GM23248 (cell line): ENCODE measurements at regions of chr20 and their contacts with region 1.

Region 1: GRCh38 chr20:59217794-59218280 is 54.2 kb downstream of the ZNF831 start:
- DNase-seq: peak; percentile 23
- H3K4me3 ChIP-seq: no peak overlapping the region
- H3K27ac ChIP-seq: no peak overlapping the region
- H3K4me1 ChIP-seq: peaks cover 5% of the 10 kb centered on the region
- H3K27me3 ChIP-seq: peaks cover 28% of the 10 kb centered on the region

Region 2: GRCh38 chr20:58623826-58624473 is 593.9 kb before region 1 on chr20:
- in situ Hi-C with region 1: no loop called
- DNase-seq: peak; percentile 99
- H3K4me3 ChIP-seq: no peak overlapping the region
- H3K27ac ChIP-seq: peak overlapping the region; percentile 66
- H3K4me1 ChIP-seq: peaks cover 29% of the 10 kb centered on the region
- H3K27me3 ChIP-seq: no peaks in the 10 kb centered on the region

Region 3: DNA sequence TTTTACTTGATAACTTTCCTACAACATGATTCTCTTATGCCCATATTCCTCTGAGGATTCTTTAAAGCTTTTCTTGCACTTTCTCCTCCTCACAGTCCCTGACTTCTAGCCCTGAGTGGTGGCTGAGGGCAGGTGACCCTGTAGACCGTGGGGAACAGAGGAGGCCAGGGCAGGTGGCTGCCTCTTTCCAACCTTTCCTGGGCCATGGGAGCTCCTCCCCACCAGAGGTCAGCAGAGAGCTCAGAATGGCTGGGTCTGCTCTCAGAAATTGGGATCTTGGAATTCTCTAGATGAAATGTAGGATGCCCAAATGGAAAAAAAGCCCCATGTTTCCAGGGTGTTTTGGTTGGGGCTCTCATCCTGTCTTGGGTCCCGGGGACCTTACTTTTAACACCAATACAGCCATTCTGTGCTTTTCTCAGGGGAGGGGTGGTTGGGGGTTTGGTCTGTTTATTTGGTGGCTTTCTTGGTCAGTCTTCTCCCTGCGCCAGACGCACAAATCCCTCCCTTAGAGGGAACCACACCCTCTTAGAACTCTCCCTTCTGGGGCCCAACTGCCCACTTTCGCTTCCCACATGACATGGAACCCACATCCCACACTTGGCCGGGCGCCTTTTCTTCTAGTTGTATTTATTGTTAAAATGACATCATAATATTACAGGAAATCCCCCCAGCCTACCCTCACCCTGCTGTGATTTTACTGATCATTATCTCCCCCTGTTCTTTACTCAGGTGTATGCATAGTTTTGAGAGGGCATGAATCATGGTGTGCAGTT is 347.4 kb before region 1 on chr20:
- in situ Hi-C with region 1: loop called (anchors 10 kb)
- DNase-seq: peak; percentile 71
- H3K4me3 ChIP-seq: no peak overlapping the region
- H3K27ac ChIP-seq: no peak overlapping the region
- H3K4me1 ChIP-seq: peaks cover 10% of the 10 kb centered on the region
- H3K27me3 ChIP-seq: no peaks in the 10 kb centered on the region